ENCODE measurements at regions of chr14 and their contacts with region 1.

Region 1: DNA sequence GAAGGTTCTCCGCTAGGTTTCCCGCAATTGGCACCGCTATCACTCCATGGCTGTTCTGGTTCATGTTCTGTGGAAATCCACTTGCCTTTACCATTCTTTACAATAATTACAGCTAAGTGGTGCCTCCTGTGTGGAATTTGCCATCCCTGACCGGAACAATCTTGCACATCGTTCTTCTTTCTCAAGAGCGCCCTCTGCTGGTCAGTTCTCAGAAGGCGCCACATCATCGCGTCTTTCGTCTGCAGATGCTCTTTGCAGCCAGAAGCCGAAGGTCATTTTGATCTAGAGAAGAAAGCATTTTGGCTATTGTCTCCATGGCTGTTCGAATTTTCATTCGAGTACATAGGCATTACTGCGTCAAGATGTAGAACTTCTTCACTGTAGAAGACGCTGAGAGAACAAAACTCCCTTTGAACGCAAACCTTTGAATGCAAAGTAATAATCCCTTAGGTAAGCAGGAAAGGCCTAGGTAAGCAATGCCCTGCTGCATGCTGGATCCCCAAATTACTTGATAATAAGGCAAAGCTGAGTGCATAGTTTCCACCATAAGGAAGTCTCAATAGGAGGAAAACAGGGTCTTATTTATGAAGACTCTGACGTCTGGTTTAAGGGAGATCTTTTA is 10.1 kb upstream of the RTRAF start:
- DNase-seq: peak; percentile 90
- ATAC-seq: peak; percentile 70
- H3K4me3 Mint-ChIP-seq: no peak overlapping the region
- H3K27ac Mint-ChIP-seq: no peak overlapping the region
- H3K4me1 Mint-ChIP-seq: peaks cover 7% of the 10 kb centered on the region
- H3K27me3 Mint-ChIP-seq: no peaks in the 10 kb centered on the region
- CTCF ChIP-seq: peak; percentile 96

Region 2: GRCh38 chr14:51828017-51828797 is 151.0 kb before region 1 on chr14:
- CTCF ChIA-PET with region 1: interaction called, 20 read pairs
- POLR2A ChIA-PET with region 1: no interaction called
- intact Hi-C with region 1: no loop called
- DNase-seq: peak; percentile 83
- ATAC-seq: peak; percentile 98
- H3K4me3 Mint-ChIP-seq: no peak overlapping the region
- H3K27ac Mint-ChIP-seq: no peak overlapping the region
- H3K4me1 Mint-ChIP-seq: no peaks in the 10 kb centered on the region
- H3K27me3 Mint-ChIP-seq: no peaks in the 10 kb centered on the region
- CTCF ChIP-seq: no peak

Region 3: GRCh38 chr14:51860164-51860824 is 118.9 kb before region 1 on chr14 and contains the start of gene GNG2:
- CTCF ChIA-PET with region 1: interaction called, 29 read pairs
- POLR2A ChIA-PET with region 1: interaction called, 3 read pairs
- intact Hi-C with region 1: no loop called
- DNase-seq: peak; percentile 91
- ATAC-seq: peak; percentile 95
- H3K4me3 Mint-ChIP-seq: peak within 1 kb of the TSS; percentile 98
- H3K27ac Mint-ChIP-seq: peak within 1 kb of the TSS; percentile 90
- H3K4me1 Mint-ChIP-seq: peaks cover 44% of the 10 kb centered on the region
- H3K27me3 Mint-ChIP-seq: no peaks in the 10 kb centered on the region
- CTCF ChIP-seq: no peak
- total RNA-seq, gene GNG2: 174 to 184 TPM

Region 4: DNA sequence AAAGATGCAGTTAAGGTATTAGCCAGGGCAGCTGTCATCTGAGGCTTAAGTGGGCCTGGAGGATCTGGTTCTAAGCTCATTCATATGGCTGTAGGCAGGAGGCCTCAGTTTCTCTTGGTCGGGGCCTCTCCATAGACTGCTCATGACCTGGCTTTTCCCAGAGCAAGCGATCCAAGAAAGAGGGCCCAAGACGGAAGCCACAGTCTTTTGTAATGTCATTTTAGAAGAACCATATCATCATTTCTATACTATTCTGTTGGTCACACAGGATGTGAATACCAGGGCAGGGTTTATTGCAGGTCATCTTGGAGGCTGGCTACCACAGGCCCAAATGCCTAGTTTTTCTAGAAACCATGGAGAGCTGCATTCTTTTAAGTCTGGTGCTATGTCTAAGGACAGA is 71.1 kb before region 1 on chr14:
- CTCF ChIA-PET with region 1: interaction called, 11 read pairs
- POLR2A ChIA-PET with region 1: no interaction called
- intact Hi-C with region 1: no loop called
- DNase-seq: no peak
- ATAC-seq: no peak
- H3K4me3 Mint-ChIP-seq: no peak overlapping the region
- H3K27ac Mint-ChIP-seq: peak overlapping the region; percentile 48
- H3K4me1 Mint-ChIP-seq: peaks cover 66% of the 10 kb centered on the region
- H3K27me3 Mint-ChIP-seq: no peaks in the 10 kb centered on the region
- CTCF ChIP-seq: no peak

Region 5: GRCh38 chr14:51996148-51996746 is 17.0 kb after region 1 on chr14:
- CTCF ChIA-PET with region 1: interaction called, 18 read pairs
- POLR2A ChIA-PET with region 1: no interaction called
- intact Hi-C with region 1: no loop called
- DNase-seq: peak; percentile 15
- ATAC-seq: no peak
- H3K4me3 Mint-ChIP-seq: no peak overlapping the region
- H3K27ac Mint-ChIP-seq: no peak overlapping the region
- H3K4me1 Mint-ChIP-seq: peaks cover 34% of the 10 kb centered on the region
- H3K27me3 Mint-ChIP-seq: no peaks in the 10 kb centered on the region
- CTCF ChIP-seq: peak; percentile 85

Region 6: GRCh38 chr14:52013984-52014600 is 34.9 kb after region 1 on chr14:
- CTCF ChIA-PET with region 1: no interaction called
- POLR2A ChIA-PET with region 1: no interaction called
- intact Hi-C with region 1: no loop called
- DNase-seq: peak; percentile 28
- ATAC-seq: peak; percentile 42
- H3K4me3 Mint-ChIP-seq: no peak overlapping the region
- H3K27ac Mint-ChIP-seq: no peak overlapping the region
- H3K4me1 Mint-ChIP-seq: no peaks in the 10 kb centered on the region
- H3K27me3 Mint-ChIP-seq: peaks cover 5% of the 10 kb centered on the region
- CTCF ChIP-seq: peak; percentile 28

Measured in activated CD8-positive, alpha-beta T cell treated with anti-CD3 and anti-CD28 coated beads for 36 hours (primary cell).